Naive thymus-derived CD4-positive, alpha-beta T cell (primary cell): ENCODE measurements at regions of chr17 and their contacts with region 1.

Region 1: DNA sequence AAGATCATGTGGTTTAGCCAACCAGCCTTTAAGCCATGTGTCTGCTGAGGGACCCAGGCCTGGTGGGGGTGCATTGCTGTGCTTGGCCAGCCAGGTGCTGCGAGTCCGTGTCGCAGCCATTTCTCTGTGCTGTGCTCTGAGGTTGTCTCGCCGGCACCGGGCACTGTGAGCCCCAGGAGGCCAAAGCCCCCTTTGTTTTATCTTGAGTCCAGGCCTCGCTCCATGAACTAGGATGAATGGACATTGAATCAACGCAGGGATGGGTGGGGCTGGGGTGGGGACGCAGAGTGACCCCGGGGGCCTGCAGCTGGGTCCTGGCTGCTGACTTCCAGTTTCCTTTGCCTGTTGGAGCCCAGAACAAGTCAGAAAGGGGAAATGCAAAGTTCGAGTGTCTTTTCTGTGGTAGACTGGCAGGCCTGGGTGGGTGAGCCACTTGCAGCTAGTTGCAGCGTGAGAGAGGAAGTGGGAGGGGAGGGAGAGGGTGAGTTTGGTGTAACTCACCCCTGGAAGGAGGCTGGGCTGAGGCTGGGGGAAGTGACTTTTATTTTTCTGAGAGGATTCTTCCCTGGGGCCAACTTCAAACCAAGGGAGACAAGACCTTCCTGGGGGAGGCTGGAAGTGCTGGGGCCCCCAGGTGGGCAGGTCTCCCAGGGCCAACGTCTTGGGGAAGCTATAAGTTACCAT is 324.7 kb downstream of the SEC14L1 start:
- DNase-seq: peak in 8 of 9 donors; percentile 67 to 89 (median 87)
- ATAC-seq: peak; percentile 97
- H3K4me3 ChIP-seq: peak overlapping the region; percentile 54
- H3K4me3 Mint-ChIP-seq: peak overlapping the region; percentile 79 to 87 (median 84)
- H3K27ac ChIP-seq: peak overlapping the region; percentile 64
- H3K27ac Mint-ChIP-seq: peak overlapping the region; percentile 88 to 100 (median 94)
- H3K4me1 ChIP-seq: peaks cover 88 to 90% of the 10 kb centered on the region in 2 donors
- H3K4me1 Mint-ChIP-seq: peaks cover 74 to 96% (median 86%) of the 10 kb centered on the region in 7 donors
- H3K27me3 ChIP-seq: no peaks in the 10 kb centered on the region
- H3K27me3 Mint-ChIP-seq: no peaks in the 10 kb centered on the region

Region 2: DNA sequence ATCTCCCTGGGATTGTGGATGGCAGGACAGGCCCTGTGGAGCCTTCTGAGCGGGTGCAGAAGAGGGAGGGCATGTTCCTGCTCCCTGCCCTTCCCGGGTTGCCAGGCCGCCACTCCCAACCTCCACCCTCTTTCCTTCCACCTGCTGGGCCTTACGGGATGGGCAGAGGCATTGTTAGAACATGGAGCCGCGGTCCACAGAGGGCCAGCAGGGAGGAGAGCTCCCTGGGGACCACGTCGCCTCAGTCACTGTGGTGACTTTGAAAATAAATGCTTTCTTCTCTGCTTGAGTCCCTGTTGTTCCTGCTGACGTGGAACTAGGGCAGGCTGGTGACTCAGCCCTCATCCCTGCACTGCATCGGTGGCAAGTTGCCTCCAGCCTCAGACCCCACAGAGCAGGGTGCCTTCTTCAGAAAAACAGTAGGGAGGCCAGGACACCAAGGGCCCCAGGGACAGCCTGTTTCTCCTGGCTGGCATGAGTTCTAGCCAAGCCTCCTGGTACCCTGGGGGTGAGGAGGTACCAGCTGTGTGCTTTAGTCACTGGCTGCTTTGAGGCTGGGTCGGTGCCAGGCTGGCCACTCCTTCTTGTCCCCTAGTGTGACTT is 99.8 kb before region 1 on chr17:
- CTCF ChIA-PET with region 1: no interaction called
- POLR2A ChIA-PET with region 1: no interaction called
- intact Hi-C with region 1: no loop called
- DNase-seq: no peak
- ATAC-seq: no peak
- H3K4me3 ChIP-seq: no peak overlapping the region
- H3K4me3 Mint-ChIP-seq: peak overlapping the region in 5 of 10 donors; percentile 73 to 86 (median 78)
- H3K27ac ChIP-seq: no peak overlapping the region
- H3K27ac Mint-ChIP-seq: peak overlapping the region in 5 of 9 donors; percentile 15 to 92 (median 71)
- H3K4me1 ChIP-seq: peaks cover 4 to 65% of the 10 kb centered on the region in 2 donors
- H3K4me1 Mint-ChIP-seq: peaks cover 42 to 80% (median 55%) of the 10 kb centered on the region in 7 donors
- H3K27me3 ChIP-seq: no peaks in the 10 kb centered on the region
- H3K27me3 Mint-ChIP-seq: peaks cover 0 to 11% (median 0%) of the 10 kb centered on the region in 5 donors

Region 3: DNA sequence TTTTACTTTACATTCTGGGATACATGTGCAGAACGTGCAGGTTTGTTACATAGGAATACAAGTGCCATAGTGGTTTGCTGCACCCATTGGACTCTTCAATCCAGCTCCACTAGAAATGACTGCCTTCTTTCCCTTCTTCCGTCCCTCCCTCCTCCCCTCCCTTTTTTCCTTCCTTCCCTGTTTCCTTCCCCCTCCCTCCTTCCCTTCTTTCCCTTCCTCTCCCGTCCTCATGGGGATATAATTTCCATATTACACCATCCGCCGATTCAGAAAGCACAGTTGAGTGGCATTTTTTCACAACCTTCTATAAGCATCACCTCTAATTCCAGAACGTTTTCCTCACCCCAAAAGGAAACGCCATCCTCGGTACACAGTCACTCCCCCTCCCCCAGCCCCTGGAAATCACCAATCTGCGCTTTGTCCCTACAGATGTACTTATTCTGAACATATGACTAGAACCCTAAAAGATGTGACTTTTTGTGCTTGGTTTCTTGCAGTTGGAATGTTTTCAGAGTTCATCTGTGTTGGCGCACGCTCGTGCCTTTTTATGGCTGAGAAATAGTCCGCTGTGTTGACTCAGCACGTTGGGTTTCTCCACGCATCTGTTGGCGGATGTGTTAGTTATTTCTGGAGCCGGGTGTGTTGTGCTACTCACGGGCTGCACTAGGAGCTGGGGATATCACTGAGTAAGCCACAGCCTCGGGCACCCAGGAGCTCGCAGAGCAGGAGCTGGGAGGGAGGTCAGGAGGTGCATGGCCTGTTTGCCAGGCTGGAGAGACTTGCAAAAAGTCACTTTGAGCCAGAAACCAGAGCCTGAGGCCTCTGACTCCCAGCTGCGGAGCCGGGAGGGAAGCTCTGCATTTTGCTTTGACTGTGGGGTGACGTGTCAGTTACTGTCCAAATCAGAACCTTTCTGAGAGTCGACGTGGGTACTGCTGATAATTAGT is 11.7 kb after region 1 on chr17:
- CTCF ChIA-PET with region 1: interaction called, 4 read pairs
- POLR2A ChIA-PET with region 1: interaction called, 97 read pairs
- intact Hi-C with region 1: loop called in 1 of 2 experiments (anchors 1 kb)
- DNase-seq: peak in 1 of 9 donors; percentile 23
- ATAC-seq: no peak
- H3K4me3 ChIP-seq: no peak overlapping the region
- H3K4me3 Mint-ChIP-seq: peak overlapping the region; percentile 20 to 85 (median 54)
- H3K27ac ChIP-seq: peak overlapping the region; percentile 71
- H3K27ac Mint-ChIP-seq: peak overlapping the region; percentile 62 to 97 (median 94)
- H3K4me1 ChIP-seq: peaks cover 61 to 82% of the 10 kb centered on the region in 2 donors
- H3K4me1 Mint-ChIP-seq: peaks cover 60 to 92% (median 73%) of the 10 kb centered on the region in 7 donors
- H3K27me3 ChIP-seq: no peaks in the 10 kb centered on the region
- H3K27me3 Mint-ChIP-seq: no peaks in the 10 kb centered on the region

Region 4: GRCh38 chr17:77681861-77682260 is 216.4 kb after region 1 on chr17:
- CTCF ChIA-PET with region 1: no interaction called
- POLR2A ChIA-PET with region 1: no interaction called
- intact Hi-C with region 1: no loop called
- DNase-seq: no peak
- ATAC-seq: no peak
- H3K4me3 ChIP-seq: no peak overlapping the region
- H3K4me3 Mint-ChIP-seq: no peak overlapping the region
- H3K27ac ChIP-seq: no peak overlapping the region
- H3K27ac Mint-ChIP-seq: no peak overlapping the region
- H3K4me1 ChIP-seq: no peaks in the 10 kb centered on the region
- H3K4me1 Mint-ChIP-seq: peaks cover 0 to 24% (median 4%) of the 10 kb centered on the region in 7 donors
- H3K27me3 ChIP-seq: no peaks in the 10 kb centered on the region
- H3K27me3 Mint-ChIP-seq: peaks cover 0 to 7% (median 0%) of the 10 kb centered on the region in 5 donors